Activated CD8-positive, alpha-beta T cell treated with anti-CD3 and anti-CD28 coated beads for 36 hours (primary cell): ENCODE measurements at regions of chr16 and their contacts with region 1.

Region 1: DNA sequence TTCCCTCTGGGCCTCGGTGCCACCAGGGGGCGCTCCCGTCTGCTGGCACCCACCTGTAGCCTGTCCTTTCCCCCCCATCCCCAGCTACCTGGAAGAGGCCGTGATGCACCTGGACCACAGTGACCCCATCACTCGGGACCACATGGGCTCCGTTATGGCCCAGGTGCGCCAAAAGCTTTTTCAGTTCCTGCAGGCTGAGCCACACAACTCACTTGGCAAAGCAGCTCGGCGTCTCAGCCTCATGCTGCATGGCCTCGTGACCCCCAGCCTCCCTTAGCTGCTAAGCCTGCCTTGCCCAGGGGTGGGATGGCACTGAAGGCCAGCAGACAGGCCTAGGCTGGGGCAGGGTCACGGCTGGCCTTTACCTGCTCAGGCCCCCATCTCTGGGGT is 818 bp upstream of the NRN1L start:
- DNase-seq: peak; percentile 83
- ATAC-seq: peak; percentile 87
- H3K4me3 Mint-ChIP-seq: no peak overlapping the region
- H3K27ac Mint-ChIP-seq: no peak overlapping the region
- H3K4me1 Mint-ChIP-seq: no peaks in the 10 kb centered on the region
- H3K27me3 Mint-ChIP-seq: no peaks in the 10 kb centered on the region
- CTCF ChIP-seq: peak; percentile 94

Region 2: DNA sequence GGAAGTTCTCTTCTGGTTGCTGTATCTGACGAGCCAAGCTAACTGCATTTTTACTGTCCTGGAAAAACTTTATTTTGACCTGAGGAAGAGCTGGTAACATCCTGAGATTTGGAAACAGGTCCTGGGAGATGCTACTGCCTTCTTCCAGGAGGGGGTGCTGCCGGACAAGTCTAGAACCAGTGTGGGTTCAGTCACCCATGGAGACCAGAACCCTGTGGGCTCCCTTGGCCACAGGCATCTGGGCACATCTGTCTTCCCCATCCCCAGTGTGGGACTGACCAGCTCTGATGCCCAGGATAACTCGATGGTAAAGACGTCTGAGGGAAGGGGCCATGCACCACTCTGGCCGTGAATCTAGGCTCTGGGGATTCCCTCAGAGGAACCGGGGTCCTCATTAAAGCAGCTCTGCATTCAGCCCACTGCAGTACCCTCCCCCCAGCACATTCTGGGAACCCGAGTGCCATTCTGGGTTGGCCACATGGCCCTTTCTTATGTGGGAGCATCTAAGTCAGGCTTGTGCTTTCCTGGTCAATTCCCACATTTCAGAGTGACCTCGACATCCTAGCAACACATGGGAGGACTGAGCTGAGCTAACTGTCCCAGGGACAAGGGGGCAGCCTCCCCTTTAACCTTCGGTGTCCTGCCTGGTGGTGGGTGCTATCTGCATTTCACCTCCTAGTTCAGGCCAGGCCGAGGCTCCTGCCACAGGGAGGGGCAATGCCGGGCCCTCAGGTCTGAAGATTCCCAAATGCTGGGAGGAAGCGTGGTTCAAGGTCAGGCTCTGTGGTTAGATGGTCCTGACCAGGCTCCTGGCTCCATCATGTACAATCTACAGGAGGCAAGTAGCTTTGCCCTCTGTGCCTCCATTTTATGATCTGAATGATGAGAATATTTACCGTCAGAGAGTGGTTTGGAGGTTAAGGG is 210.9 kb before region 1 on chr16:
- CTCF ChIA-PET with region 1: no interaction called
- POLR2A ChIA-PET with region 1: no interaction called
- intact Hi-C with region 1: no loop called
- DNase-seq: peak; percentile 71
- ATAC-seq: no peak
- H3K4me3 Mint-ChIP-seq: no peak overlapping the region
- H3K27ac Mint-ChIP-seq: no peak overlapping the region
- H3K4me1 Mint-ChIP-seq: no peaks in the 10 kb centered on the region
- H3K27me3 Mint-ChIP-seq: no peaks in the 10 kb centered on the region
- CTCF ChIP-seq: peak; percentile 69

Region 3: DNA sequence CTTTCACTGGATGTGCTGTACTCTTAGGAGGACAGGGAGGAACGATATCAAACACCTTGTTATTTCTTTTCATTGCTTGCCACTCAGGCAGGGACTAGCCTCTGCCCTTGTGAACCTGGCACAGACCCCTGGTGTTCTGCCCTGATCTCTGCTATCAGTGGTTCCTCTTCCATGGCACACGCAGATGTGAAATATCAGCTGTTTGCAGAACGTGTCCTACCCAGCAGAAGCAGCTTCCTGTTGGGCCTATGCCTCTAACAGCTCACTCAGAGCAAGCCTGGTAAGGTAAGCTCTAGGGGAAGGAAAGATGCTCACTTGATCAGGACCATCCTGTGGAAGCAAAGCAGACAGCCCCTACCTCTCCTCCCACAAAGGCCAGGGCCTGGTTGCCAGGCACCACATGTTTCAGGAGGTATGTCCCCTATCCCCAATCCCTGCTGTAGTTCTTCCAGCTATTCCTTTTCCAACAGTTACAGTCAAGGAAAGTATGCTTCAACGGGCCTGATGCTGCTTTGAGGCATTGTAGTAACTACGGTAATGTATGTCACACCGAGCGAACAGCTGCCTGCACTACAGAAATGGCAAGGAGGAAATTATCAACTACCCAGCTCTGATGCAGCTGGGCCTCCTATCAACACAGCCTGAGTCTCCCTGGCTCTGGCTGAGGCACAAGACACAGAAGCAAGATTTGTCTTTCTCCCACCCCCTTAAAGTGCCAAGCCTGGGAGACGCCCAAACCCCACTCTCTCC is 123.5 kb before region 1 on chr16:
- CTCF ChIA-PET with region 1: no interaction called
- POLR2A ChIA-PET with region 1: no interaction called
- intact Hi-C with region 1: no loop called
- DNase-seq: no peak
- ATAC-seq: no peak
- H3K4me3 Mint-ChIP-seq: no peak overlapping the region
- H3K27ac Mint-ChIP-seq: no peak overlapping the region
- H3K4me1 Mint-ChIP-seq: peaks cover 9% of the 10 kb centered on the region
- H3K27me3 Mint-ChIP-seq: no peaks in the 10 kb centered on the region
- CTCF ChIP-seq: no peak

Region 4: DNA sequence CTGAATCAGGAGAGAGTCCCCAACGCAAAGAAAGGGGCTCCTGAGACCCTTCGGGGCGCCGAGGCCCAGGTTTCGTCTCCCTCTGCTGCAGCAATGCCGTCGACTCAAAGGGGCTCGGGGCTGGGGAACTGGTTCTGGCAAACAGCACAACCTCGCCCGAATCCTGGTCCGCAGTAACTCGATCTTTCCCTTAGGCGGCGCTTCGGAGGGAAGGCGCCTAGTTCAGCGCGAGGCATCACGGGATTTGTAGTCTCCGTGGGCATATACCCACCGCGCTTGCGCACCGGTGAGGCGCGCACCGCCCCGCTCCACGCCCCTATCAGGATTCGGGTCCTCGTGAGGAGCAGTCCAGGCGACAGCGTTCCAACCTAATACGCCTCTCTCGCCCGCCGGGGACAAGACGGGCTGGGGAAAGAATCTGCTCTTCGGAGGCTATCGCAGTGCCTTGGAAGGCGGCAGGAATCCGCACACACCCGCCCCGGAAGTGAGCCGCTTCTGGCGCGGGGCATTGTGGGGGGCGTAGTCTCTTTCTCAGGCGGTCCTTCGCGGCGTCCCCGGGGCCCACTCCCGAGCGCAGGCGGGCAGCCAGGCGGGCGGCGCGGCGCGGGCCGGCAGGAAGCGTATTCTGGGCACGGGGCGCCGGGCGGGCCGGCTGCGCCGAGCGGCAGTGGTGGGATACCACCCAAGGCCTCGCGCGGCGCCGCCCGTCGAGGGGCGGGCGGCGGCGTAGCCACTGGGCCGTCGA is 41.9 kb before region 1 on chr16 and contains the start of gene THAP11:
- CTCF ChIA-PET with region 1: interaction called, 14 read pairs
- POLR2A ChIA-PET with region 1: interaction called, 4 read pairs
- intact Hi-C with region 1: no loop called
- DNase-seq: peak; percentile 96
- ATAC-seq: peak; percentile 68
- H3K4me3 Mint-ChIP-seq: peak within 1 kb of the TSS; percentile 97
- H3K27ac Mint-ChIP-seq: peak within 1 kb of the TSS; percentile 96
- H3K4me1 Mint-ChIP-seq: peaks cover 28% of the 10 kb centered on the region
- H3K27me3 Mint-ChIP-seq: no peaks in the 10 kb centered on the region
- CTCF ChIP-seq: peak; percentile 84
- total RNA-seq, gene THAP11: 40.6 to 40.7 TPM

Region 5: GRCh38 chr16:67872786-67873537 is 10.9 kb before region 1 on chr16 and contains the start of gene EDC4:
- CTCF ChIA-PET with region 1: interaction called, 33 read pairs
- POLR2A ChIA-PET with region 1: interaction called, 3 read pairs
- intact Hi-C with region 1: no loop called
- DNase-seq: peak; percentile 89
- ATAC-seq: peak; percentile 90
- H3K4me3 Mint-ChIP-seq: peak within 1 kb of the TSS; percentile 82
- H3K27ac Mint-ChIP-seq: peak within 1 kb of the TSS; percentile 93
- H3K4me1 Mint-ChIP-seq: peaks cover 27% of the 10 kb centered on the region
- H3K27me3 Mint-ChIP-seq: no peaks in the 10 kb centered on the region
- CTCF ChIP-seq: no peak
- total RNA-seq, gene EDC4: 78.7 to 90.9 TPM

Region 6: GRCh38 chr16:67917852-67918236 is 34.0 kb after region 1 on chr16:
- CTCF ChIA-PET with region 1: interaction called, 81 read pairs
- POLR2A ChIA-PET with region 1: interaction called, 3 read pairs
- intact Hi-C with region 1: no loop called
- DNase-seq: peak; percentile 75
- ATAC-seq: peak; percentile 100
- H3K4me3 Mint-ChIP-seq: no peak overlapping the region
- H3K27ac Mint-ChIP-seq: peak overlapping the region; percentile 82
- H3K4me1 Mint-ChIP-seq: peaks cover 30% of the 10 kb centered on the region
- H3K27me3 Mint-ChIP-seq: no peaks in the 10 kb centered on the region
- CTCF ChIP-seq: no peak

Region 7: DNA sequence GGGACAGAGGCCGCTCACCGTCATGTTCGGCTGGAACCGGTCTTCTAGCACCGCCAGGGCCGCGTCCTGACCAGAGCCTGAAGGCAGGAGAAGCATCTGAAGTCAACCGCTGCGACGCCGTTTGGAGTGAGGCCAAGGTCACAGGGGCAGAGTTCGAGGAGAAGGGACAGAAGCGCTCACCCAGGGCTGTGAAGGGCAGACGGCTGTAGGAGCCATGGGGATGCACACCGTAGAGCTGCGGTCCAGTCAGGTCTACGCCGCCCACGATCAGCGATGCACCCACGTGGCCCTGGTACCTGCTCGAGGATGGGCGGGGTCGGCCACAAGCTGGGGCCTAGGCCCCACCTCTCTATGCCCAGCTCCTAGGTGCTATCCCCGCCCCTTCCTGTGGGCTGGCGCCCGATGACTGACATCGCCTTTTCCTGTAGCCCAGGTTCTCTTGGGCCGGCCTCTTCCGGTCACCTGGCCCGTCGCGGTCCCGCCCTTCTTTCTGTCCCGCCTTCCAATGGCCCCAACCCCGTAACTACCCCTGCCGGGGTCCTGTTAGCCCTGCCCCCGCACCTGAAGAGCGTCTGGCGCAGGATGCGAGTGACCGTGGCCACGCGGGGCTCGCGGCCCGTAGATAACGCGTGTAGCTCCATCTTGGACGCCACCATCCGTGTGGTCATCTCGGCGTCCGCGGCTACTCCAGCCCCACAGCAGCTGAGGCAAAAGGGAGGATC is 51.7 kb after region 1 on chr16:
- CTCF ChIA-PET with region 1: interaction called, 32 read pairs
- POLR2A ChIA-PET with region 1: interaction called, 11 read pairs
- intact Hi-C with region 1: no loop called
- DNase-seq: peak; percentile 99
- ATAC-seq: peak; percentile 92
- H3K4me3 Mint-ChIP-seq: peak overlapping the region; percentile 97
- H3K27ac Mint-ChIP-seq: peak overlapping the region; percentile 100
- H3K4me1 Mint-ChIP-seq: peaks cover 42% of the 10 kb centered on the region
- H3K27me3 Mint-ChIP-seq: no peaks in the 10 kb centered on the region
- CTCF ChIP-seq: no peak

Region 8: GRCh38 chr16:67949645-67950044 is 65.8 kb after region 1 on chr16:
- CTCF ChIA-PET with region 1: no interaction called
- POLR2A ChIA-PET with region 1: no interaction called
- intact Hi-C with region 1: no loop called
- DNase-seq: no peak
- ATAC-seq: no peak
- H3K4me3 Mint-ChIP-seq: no peak overlapping the region
- H3K27ac Mint-ChIP-seq: no peak overlapping the region
- H3K4me1 Mint-ChIP-seq: no peaks in the 10 kb centered on the region
- H3K27me3 Mint-ChIP-seq: no peaks in the 10 kb centered on the region
- CTCF ChIP-seq: no peak

Region 9: GRCh38 chr16:67979955-67980678 is 96.2 kb after region 1 on chr16 and contains the start of gene DPEP3:
- CTCF ChIA-PET with region 1: no interaction called
- POLR2A ChIA-PET with region 1: no interaction called
- intact Hi-C with region 1: no loop called
- DNase-seq: no peak
- ATAC-seq: no peak
- H3K4me3 Mint-ChIP-seq: no peak within 1 kb of the TSS
- H3K27ac Mint-ChIP-seq: no peak within 1 kb of the TSS
- H3K4me1 Mint-ChIP-seq: peaks cover 21% of the 10 kb centered on the region
- H3K27me3 Mint-ChIP-seq: no peaks in the 10 kb centered on the region
- CTCF ChIP-seq: peak; percentile 39
- total RNA-seq, gene DPEP3: 0.16 to 0.25 TPM

Region 10: DNA sequence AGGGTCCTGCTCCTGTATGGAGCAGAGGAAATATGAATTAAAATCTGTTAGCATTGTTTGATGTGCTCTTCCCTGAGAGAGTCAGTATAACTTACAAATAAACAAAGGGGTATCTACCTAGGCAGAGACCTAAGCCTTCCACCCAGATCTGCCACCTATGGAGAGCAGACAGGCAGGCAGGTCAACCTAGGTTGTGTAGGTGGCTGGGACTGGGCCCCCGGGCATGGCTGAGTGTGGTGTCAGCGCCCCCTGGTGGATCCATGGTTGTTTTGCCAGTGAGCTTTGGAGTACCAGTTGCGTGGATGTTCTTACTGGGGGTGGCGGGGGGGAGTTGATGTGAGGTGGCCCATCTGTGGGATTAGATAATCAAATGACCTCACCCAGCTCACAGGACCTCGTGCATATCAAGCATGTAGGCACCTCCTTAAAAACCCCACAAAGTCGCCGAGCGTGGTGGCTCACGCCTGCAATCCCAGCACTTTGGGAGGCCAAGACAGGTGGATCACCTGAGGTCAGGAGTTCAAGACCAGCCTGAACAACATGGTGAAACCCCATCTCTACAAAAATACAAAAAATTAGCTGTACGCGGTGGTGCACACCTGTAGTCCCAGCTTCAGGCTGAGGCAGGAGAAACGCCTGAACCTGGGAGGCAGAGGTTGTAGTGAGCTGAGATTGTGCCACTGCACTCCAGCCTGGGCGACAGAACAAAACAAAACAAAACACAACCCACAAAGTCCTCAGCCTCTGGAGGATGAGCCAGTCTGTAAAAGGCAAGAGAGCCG is 156.8 kb after region 1 on chr16:
- CTCF ChIA-PET with region 1: interaction called, 28 read pairs
- POLR2A ChIA-PET with region 1: no interaction called
- intact Hi-C with region 1: no loop called
- DNase-seq: peak; percentile 95
- ATAC-seq: peak; percentile 98
- H3K4me3 Mint-ChIP-seq: no peak overlapping the region
- H3K27ac Mint-ChIP-seq: peak overlapping the region; percentile 40
- H3K4me1 Mint-ChIP-seq: peaks cover 13% of the 10 kb centered on the region
- H3K27me3 Mint-ChIP-seq: no peaks in the 10 kb centered on the region
- CTCF ChIP-seq: peak; percentile 82